HepG2 (cell line): ENCODE measurements at regions of chr20 and their contacts with region 1.

Region 1: GRCh38 chr20:56247948-56248782 is at the start of gene MC3R:
- DNase-seq: peak; percentile 68
- ATAC-seq: peak; percentile 97
- H3K4me3 ChIP-seq: no peak within 1 kb of the TSS
- H3K27ac ChIP-seq: no peak within 1 kb of the TSS
- H3K4me1 ChIP-seq: no peaks in the 10 kb centered on the region
- H3K27me3 ChIP-seq: peaks cover 0 to 3% of the 10 kb centered on the region in 2 experiments; a peak in 1 of 5 replicates
- CTCF ChIP-seq: peak; percentile 94
- EP300 ChIP-seq: no peak
- POLR2A ChIP-seq: no peak
- RAD21 ChIP-seq: peak; percentile 74
- total RNA-seq, gene MC3R: not detected in 2 replicates

Region 2: GRCh38 chr20:54680872-54681619 is 1567.1 kb before region 1 on chr20:
- CTCF ChIA-PET with region 1: interaction called, 13 read pairs
- POLR2A ChIA-PET with region 1: no interaction called
- in situ Hi-C with region 1: no loop called
- intact Hi-C with region 1: no loop called
- DNase-seq: peak; percentile 65
- ATAC-seq: peak; percentile 74
- H3K4me3 ChIP-seq: no peak overlapping the region
- H3K27ac ChIP-seq: no peak overlapping the region
- H3K4me1 ChIP-seq: no peaks in the 10 kb centered on the region
- H3K27me3 ChIP-seq: peaks cover 0 to 17% of the 10 kb centered on the region in 2 experiments; a peak in 2 of 5 replicates
- CTCF ChIP-seq: peak; percentile 78
- EP300 ChIP-seq: no peak
- POLR2A ChIP-seq: no peak
- RAD21 ChIP-seq: 0 out of 2 replicates have a peak, but pooled peaks have one; percentile 32

Region 3: GRCh38 chr20:55415567-55416142 is 832.5 kb before region 1 on chr20:
- CTCF ChIA-PET with region 1: interaction called, 7 read pairs
- POLR2A ChIA-PET with region 1: no interaction called
- in situ Hi-C with region 1: no loop called
- intact Hi-C with region 1: loop called (anchors 2 kb)
- DNase-seq: peak; percentile 21
- ATAC-seq: peak; percentile 44; the same call in 2 of the 3 replicates
- H3K4me3 ChIP-seq: no peak overlapping the region
- H3K27ac ChIP-seq: no peak overlapping the region
- H3K4me1 ChIP-seq: no peaks in the 10 kb centered on the region
- H3K27me3 ChIP-seq: no peaks in the 10 kb centered on the region; a peak in 1 of 5 replicates
- CTCF ChIP-seq: peak; percentile 70
- EP300 ChIP-seq: no peak
- POLR2A ChIP-seq: no peak
- RAD21 ChIP-seq: peak; percentile 67

Region 4: DNA sequence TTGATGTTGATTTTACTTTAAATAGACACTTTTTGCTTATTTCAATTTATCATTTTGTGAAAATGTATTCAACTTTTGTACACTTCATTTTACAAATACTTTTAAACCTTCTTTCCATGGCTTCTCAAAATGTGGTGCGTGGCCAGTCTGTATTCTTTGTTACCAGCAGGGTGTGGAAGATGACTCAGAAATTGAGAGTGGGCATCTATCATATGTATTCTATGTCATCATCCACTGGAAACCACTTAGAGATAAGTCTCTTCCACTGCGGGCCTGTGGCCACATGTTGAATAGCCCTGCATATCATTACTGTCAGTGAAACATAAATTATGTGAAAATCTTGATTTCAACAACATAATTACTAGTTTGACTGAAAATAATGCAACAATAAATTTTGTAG is 52.2 kb before region 1 on chr20:
- CTCF ChIA-PET with region 1: no interaction called
- POLR2A ChIA-PET with region 1: no interaction called
- in situ Hi-C with region 1: no loop called
- intact Hi-C with region 1: no loop called
- DNase-seq: no peak
- ATAC-seq: no peak
- H3K4me3 ChIP-seq: no peak overlapping the region
- H3K27ac ChIP-seq: no peak overlapping the region
- H3K4me1 ChIP-seq: no peaks in the 10 kb centered on the region
- H3K27me3 ChIP-seq: no peaks in the 10 kb centered on the region
- CTCF ChIP-seq: no peak
- EP300 ChIP-seq: no peak
- POLR2A ChIP-seq: no peak
- RAD21 ChIP-seq: no peak

Region 5: DNA sequence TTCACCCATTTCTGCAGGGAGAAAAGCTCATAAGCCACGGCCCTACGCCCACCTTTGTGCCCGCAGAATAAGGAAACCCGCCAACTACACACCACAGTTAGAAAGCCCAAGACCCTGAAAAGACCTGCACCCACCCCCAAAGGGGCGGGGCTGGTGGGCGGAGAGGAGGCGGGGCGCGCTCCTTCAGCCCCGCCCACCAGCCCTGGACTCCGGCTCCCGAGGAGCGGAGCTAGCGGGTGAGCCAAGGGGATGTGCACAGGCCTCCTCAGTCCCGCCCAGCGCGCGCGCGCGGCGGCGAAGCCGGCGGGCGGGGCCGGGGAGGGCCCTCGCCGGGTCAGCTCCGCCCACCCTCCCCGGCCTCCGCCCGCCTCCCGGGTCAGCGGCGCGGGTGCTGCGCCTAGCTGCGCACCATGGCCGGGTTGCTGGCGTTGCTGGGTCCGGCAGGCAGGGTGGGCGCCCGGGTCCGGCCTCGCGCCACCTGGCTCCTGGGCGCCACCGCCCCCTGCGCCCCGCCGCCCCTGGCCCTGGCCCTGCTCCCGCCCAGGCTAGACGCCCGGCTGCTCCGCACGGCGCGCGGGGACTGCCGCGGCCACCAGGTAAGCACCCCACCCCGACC is 110.5 kb after region 1 on chr20 and contains the start of gene FAM210B:
- CTCF ChIA-PET with region 1: no interaction called
- POLR2A ChIA-PET with region 1: no interaction called
- in situ Hi-C with region 1: loop called (anchors 10 kb)
- intact Hi-C with region 1: no loop called
- DNase-seq: peak; percentile 90
- ATAC-seq: peak; percentile 83
- H3K4me3 ChIP-seq: peak within 1 kb of the TSS; percentile 83 to 94 (median 93)
- H3K27ac ChIP-seq: peak within 1 kb of the TSS; percentile 76
- H3K4me1 ChIP-seq: peaks cover 26% of the 10 kb centered on the region
- H3K27me3 ChIP-seq: no peaks in the 10 kb centered on the region; a peak in 1 of 5 replicates
- CTCF ChIP-seq: no peak
- EP300 ChIP-seq: peak in 1 of 2 experiments; percentile 24; a peak in 1 of 4 replicates
- POLR2A ChIP-seq: peak; percentile 55 to 86; a peak in 3 of 4 replicates
- RAD21 ChIP-seq: no peak; the same call in 1 of the 2 replicates
- total RNA-seq, gene FAM210B: 75.9 and 88.4 TPM in 2 replicates